ENCODE measurements at regions of chr4 and their contacts with region 1.

Region 1: GRCh38 chr4:184825896-184826690 is at the start of gene ACSL1:
- DNase-seq: peak; percentile 75
- H3K4me3 Mint-ChIP-seq: peak within 1 kb of the TSS; percentile 93
- H3K27ac Mint-ChIP-seq: peak within 1 kb of the TSS; percentile 96
- H3K4me1 Mint-ChIP-seq: peaks cover 56% of the 10 kb centered on the region
- H3K27me3 Mint-ChIP-seq: peaks cover 8% of the 10 kb centered on the region
- total RNA-seq, gene ACSL1: 56.7 and 61.8 TPM in 2 replicates

Region 2: GRCh38 chr4:183504064-183504929 is 1321.8 kb before region 1 on chr4:
- intact Hi-C with region 1: loop called (anchors 10 kb)
- DNase-seq: peak; percentile 100
- H3K4me3 Mint-ChIP-seq: peak overlapping the region; percentile 92
- H3K27ac Mint-ChIP-seq: peak overlapping the region; percentile 97
- H3K4me1 Mint-ChIP-seq: peaks cover 23% of the 10 kb centered on the region
- H3K27me3 Mint-ChIP-seq: no peaks in the 10 kb centered on the region

Region 3: GRCh38 chr4:184474263-184475095 is 351.6 kb before region 1 on chr4 and contains the start of gene IRF2:
- intact Hi-C with region 1: loop called (anchors 10 kb)
- DNase-seq: peak; percentile 94
- H3K4me3 Mint-ChIP-seq: peak within 1 kb of the TSS; percentile 97
- H3K27ac Mint-ChIP-seq: peak within 1 kb of the TSS; percentile 96
- H3K4me1 Mint-ChIP-seq: peaks cover 64% of the 10 kb centered on the region
- H3K27me3 Mint-ChIP-seq: no peaks in the 10 kb centered on the region
- total RNA-seq, gene IRF2: 64.2 and 75.8 TPM in 2 replicates

Region 4: DNA sequence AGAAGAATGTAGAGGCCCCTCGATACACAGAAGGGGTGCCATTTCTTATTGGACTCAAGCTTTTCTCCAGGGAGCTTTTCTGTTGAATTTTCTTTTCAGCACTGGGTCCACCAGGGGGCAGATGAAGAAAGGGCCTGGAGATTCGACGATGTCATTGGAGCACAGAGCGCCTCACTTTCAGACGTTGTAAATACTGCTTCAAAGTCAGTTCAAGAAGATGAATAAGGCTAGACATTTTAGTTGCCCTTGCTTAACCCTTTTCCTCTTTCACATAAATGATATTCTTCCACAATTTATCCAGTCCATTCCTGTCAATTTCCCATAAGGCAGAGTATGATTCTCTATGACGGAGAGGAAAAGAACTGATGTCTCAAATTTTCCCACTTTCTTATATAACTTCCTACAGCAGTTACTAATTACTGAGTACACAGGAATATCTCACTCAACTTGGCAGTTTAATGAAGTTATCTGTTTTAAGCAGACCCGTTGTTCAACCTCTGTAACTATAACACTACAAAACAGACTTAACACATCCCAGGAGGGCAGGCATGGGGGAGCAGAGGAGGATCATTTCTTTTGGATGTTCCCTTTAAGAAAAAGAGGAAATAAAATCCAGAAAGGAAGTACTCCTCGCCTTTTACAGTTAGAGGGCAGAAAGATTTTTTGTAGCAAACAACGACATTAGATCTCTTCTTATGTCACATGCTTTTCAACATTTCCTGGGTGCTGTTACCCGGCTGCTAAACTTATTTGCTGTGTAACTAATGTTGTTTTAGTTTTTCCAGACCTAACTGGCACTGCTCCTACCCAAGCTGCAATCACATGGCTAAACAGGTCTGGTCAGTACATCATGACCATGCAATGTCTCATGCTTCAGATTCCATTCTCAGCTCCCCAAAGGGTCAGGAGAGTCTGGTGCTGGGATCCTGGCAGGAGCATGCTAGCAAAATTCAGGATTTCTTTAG is 80.0 kb before region 1 on chr4:
- intact Hi-C with region 1: loop called (anchors 1 kb)
- DNase-seq: peak; percentile 55
- H3K4me3 Mint-ChIP-seq: peak overlapping the region; percentile 16
- H3K27ac Mint-ChIP-seq: peak overlapping the region; percentile 27
- H3K4me1 Mint-ChIP-seq: peaks cover 21% of the 10 kb centered on the region
- H3K27me3 Mint-ChIP-seq: no peaks in the 10 kb centered on the region

Region 5: DNA sequence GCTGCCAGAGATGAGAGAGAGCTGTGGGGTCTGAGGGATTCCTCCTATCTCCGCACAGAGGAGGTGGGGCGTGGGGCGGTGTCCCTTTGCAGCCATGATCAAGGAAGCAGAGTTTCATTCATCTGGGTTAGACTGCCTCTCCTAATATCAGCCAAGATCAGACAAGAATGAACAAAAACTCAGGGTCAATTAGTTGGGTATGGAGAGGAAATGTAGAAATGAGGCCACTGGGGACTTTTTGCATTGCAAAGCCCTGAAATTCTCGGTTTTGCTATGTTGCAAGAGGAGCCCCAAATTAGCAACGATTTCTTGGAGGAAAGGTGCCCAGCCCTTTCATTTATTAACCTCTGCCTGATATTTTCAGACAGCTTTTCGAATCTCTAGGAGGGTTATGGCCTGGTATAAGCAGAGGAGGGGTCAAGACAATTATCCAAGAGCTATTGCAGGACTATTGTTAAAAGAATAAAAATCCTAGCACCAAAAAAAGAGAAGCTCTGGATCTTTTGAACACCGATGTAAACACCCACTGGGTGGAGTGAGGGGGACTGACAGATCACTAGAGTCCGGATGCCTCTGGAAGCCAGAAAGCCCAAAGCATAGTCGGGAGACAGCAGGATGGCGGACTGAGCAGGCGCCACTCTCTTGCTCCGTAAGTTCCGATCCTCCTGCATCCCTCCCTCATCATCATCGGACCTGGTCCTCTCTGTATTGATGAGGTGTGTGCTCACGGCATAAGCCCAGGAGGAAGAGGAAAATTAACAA is 34.1 kb after region 1 on chr4:
- intact Hi-C with region 1: loop called (anchors 5 kb)
- DNase-seq: no peak
- H3K4me3 Mint-ChIP-seq: peak overlapping the region; percentile 50
- H3K27ac Mint-ChIP-seq: peak overlapping the region; percentile 67
- H3K4me1 Mint-ChIP-seq: peaks cover 46% of the 10 kb centered on the region
- H3K27me3 Mint-ChIP-seq: peaks cover 4% of the 10 kb centered on the region

Region 6: GRCh38 chr4:185020293-185020808 is 194.3 kb after region 1 on chr4:
- intact Hi-C with region 1: no loop called
- DNase-seq: no peak
- H3K4me3 Mint-ChIP-seq: no peak overlapping the region
- H3K27ac Mint-ChIP-seq: peak overlapping the region; percentile 55
- H3K4me1 Mint-ChIP-seq: no peaks in the 10 kb centered on the region
- H3K27me3 Mint-ChIP-seq: peaks cover 88% of the 10 kb centered on the region

Region 7: GRCh38 chr4:185203486-185204237 is 377.6 kb after region 1 on chr4 and contains the start of gene CFAP97:
- intact Hi-C with region 1: loop called (anchors 1 kb)
- DNase-seq: peak; percentile 75
- H3K4me3 Mint-ChIP-seq: peak within 1 kb of the TSS; percentile 99
- H3K27ac Mint-ChIP-seq: peak within 1 kb of the TSS; percentile 100
- H3K4me1 Mint-ChIP-seq: peaks cover 36% of the 10 kb centered on the region
- H3K27me3 Mint-ChIP-seq: peaks cover 1% of the 10 kb centered on the region
- total RNA-seq, gene CFAP97: 52.4 and 54.6 TPM in 2 replicates

Measured in activated T-helper 1 cell treated with anti-CD3 and anti-CD28 coated beads, Interleukin-12 subunit alpha, Interleukin-12 subunit beta, Interleukin-2, Interleukin-4 antibody, amounts not matched to agents 30 ng/mL and 10 ng/mL and 1 ng/mL, durations not matched to agents 14 hours and 24 hours and 36 hours (primary cell).